ENCODE measurements at regions of chr5 and their contacts with region 1.

Region 1: GRCh38 chr5:17189381-17190036 is 27.9 kb upstream of the BASP1 start:
- DNase-seq: peak; percentile 79
- H3K4me3 Mint-ChIP-seq: no peak overlapping the region
- H3K27ac Mint-ChIP-seq: no peak overlapping the region
- H3K4me1 Mint-ChIP-seq: peaks cover 2% of the 10 kb centered on the region
- H3K27me3 Mint-ChIP-seq: peaks cover 10% of the 10 kb centered on the region

Region 2: GRCh38 chr5:15695215-15695731 is 1494.2 kb before region 1 on chr5:
- CTCF ChIA-PET with region 1: no interaction called
- intact Hi-C with region 1: no loop called
- DNase-seq: no peak
- H3K4me3 Mint-ChIP-seq: no peak overlapping the region
- H3K27ac Mint-ChIP-seq: no peak overlapping the region
- H3K4me1 Mint-ChIP-seq: no peaks in the 10 kb centered on the region
- H3K27me3 Mint-ChIP-seq: no peaks in the 10 kb centered on the region

Region 3: GRCh38 chr5:16160706-16161105 is 1028.8 kb before region 1 on chr5:
- CTCF ChIA-PET with region 1: no interaction called
- intact Hi-C with region 1: loop called (anchors 1 kb)
- DNase-seq: peak; percentile 45
- H3K4me3 Mint-ChIP-seq: no peak overlapping the region
- H3K27ac Mint-ChIP-seq: no peak overlapping the region
- H3K4me1 Mint-ChIP-seq: no peaks in the 10 kb centered on the region
- H3K27me3 Mint-ChIP-seq: peaks cover 2% of the 10 kb centered on the region

Region 4: GRCh38 chr5:16489322-16489791 is 700.2 kb before region 1 on chr5:
- CTCF ChIA-PET with region 1: no interaction called
- intact Hi-C with region 1: loop called (anchors 2 kb)
- DNase-seq: no peak
- H3K4me3 Mint-ChIP-seq: no peak overlapping the region
- H3K27ac Mint-ChIP-seq: no peak overlapping the region
- H3K4me1 Mint-ChIP-seq: peaks cover 15% of the 10 kb centered on the region
- H3K27me3 Mint-ChIP-seq: no peaks in the 10 kb centered on the region

Region 5: GRCh38 chr5:16690243-16690852 is 499.2 kb before region 1 on chr5:
- CTCF ChIA-PET with region 1: interaction called, 3 read pairs
- intact Hi-C with region 1: loop called (anchors 1 kb)
- DNase-seq: peak; percentile 36
- H3K4me3 Mint-ChIP-seq: no peak overlapping the region
- H3K27ac Mint-ChIP-seq: no peak overlapping the region
- H3K4me1 Mint-ChIP-seq: peaks cover 3% of the 10 kb centered on the region
- H3K27me3 Mint-ChIP-seq: no peaks in the 10 kb centered on the region

Region 6: GRCh38 chr5:16791036-16791705 is 398.3 kb before region 1 on chr5:
- CTCF ChIA-PET with region 1: interaction called, 33 read pairs
- intact Hi-C with region 1: loop called (anchors 1 kb)
- DNase-seq: peak; percentile 26
- H3K4me3 Mint-ChIP-seq: no peak overlapping the region
- H3K27ac Mint-ChIP-seq: no peak overlapping the region
- H3K4me1 Mint-ChIP-seq: peaks cover 7% of the 10 kb centered on the region
- H3K27me3 Mint-ChIP-seq: no peaks in the 10 kb centered on the region

Region 7: DNA sequence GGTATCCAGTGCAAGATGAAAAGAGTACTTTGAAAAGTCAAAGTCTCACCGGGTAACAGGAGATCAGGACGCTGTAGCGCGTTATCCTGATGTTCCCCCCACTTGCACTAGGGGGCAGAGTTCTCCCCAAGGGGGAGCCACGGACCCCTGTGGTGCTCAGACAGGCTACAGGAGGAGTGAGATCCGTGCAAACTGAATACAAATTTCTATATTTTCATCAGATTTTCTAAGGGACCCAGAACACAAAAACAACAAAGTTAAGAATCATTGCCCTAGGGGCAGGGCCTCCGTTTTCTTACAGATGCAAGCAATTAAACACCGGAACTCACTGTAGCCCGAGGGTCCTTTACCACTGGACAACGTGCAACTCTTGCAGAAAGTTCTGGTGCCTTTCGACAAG is 255.4 kb before region 1 on chr5:
- CTCF ChIA-PET with region 1: no interaction called
- intact Hi-C with region 1: loop called (anchors 1 kb)
- DNase-seq: peak; percentile 64
- H3K4me3 Mint-ChIP-seq: peak overlapping the region; percentile 29
- H3K27ac Mint-ChIP-seq: no peak overlapping the region
- H3K4me1 Mint-ChIP-seq: peaks cover 17% of the 10 kb centered on the region
- H3K27me3 Mint-ChIP-seq: peaks cover 70% of the 10 kb centered on the region

Region 8: GRCh38 chr5:17132444-17133083 is 56.9 kb before region 1 on chr5:
- CTCF ChIA-PET with region 1: interaction called, 9 read pairs
- intact Hi-C with region 1: loop called (anchors 5 kb)
- DNase-seq: no peak
- H3K4me3 Mint-ChIP-seq: no peak overlapping the region
- H3K27ac Mint-ChIP-seq: no peak overlapping the region
- H3K4me1 Mint-ChIP-seq: peaks cover 6% of the 10 kb centered on the region
- H3K27me3 Mint-ChIP-seq: peaks cover 23% of the 10 kb centered on the region

Region 9: GRCh38 chr5:17314907-17315471 is 125.5 kb after region 1 on chr5:
- CTCF ChIA-PET with region 1: no interaction called
- intact Hi-C with region 1: no loop called
- DNase-seq: no peak
- H3K4me3 Mint-ChIP-seq: no peak overlapping the region
- H3K27ac Mint-ChIP-seq: no peak overlapping the region
- H3K4me1 Mint-ChIP-seq: no peaks in the 10 kb centered on the region
- H3K27me3 Mint-ChIP-seq: no peaks in the 10 kb centered on the region